Sigmoid colon (tissue), 7 donors: ENCODE measurements at regions of chr19 and their contacts with region 1.

Region 1: DNA sequence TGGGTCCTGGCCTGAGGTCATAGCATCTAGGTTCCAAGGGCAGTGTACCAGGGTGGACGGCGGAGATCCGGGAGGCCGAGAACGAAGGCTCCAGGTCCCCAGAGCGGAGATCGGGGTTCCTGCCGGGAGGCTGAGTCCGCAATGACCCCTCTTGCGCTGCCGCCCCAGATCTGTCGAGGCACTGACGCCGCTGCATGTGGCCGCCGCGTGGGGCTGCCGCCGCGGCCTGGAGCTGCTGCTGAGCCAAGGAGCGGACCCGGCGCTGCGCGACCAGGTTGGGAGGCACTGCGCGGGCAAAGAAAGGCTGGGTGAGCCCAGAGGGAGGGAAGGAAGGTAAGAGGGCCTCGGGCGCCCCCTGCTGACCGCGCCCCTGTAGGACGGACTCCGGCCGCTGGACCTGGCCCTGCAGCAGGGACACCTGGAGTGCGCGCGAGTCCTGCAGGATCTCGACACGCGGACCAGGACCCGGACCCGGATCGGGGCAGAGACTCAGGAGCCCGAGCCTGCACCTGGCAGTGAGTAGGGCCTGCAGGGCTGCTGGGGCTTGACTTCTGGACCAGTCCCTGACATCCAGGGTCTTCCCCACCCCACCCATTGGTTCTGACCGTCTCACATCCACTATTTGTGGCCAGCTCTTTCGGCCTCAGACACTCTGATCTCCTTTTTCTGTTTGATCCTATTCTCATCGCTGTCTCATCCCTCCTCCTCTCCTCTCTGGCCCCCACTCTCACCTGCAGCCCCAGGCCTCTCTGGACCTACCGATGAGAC is 971 bp downstream of the ANKLE1 start:
- DNase-seq: peak; percentile 89
- H3K4me3 ChIP-seq: peak overlapping the region in 3 of 4 donors; percentile 13 to 39 (median 35)
- H3K27ac ChIP-seq: no peak overlapping the region
- H3K4me1 ChIP-seq: peaks cover 0 to 18% (median 15%) of the 10 kb centered on the region in 4 donors
- H3K27me3 ChIP-seq: peaks cover 11 to 15% (median 15%) of the 10 kb centered on the region in 3 donors
- CTCF ChIP-seq: peak; percentile 75 to 91 (median 82)
- EP300 ChIP-seq: no peak
- POLR2A ChIP-seq: no peak

Region 2: GRCh38 chr19:17069218-17069617 is 213.5 kb before region 1 on chr19:
- intact Hi-C with region 1: loop called (anchors 2 kb)
- DNase-seq: no peak
- H3K4me3 ChIP-seq: no peak overlapping the region
- H3K27ac ChIP-seq: no peak overlapping the region
- H3K4me1 ChIP-seq: peaks cover 0 to 9% (median 3%) of the 10 kb centered on the region in 4 donors
- H3K27me3 ChIP-seq: no peaks in the 10 kb centered on the region
- CTCF ChIP-seq: no peak
- EP300 ChIP-seq: no peak
- POLR2A ChIP-seq: no peak

Region 3: GRCh38 chr19:17205237-17206140 is 77.2 kb before region 1 on chr19:
- intact Hi-C with region 1: loop called (anchors 1 kb)
- DNase-seq: peak; percentile 78
- H3K4me3 ChIP-seq: no peak overlapping the region
- H3K27ac ChIP-seq: no peak overlapping the region
- H3K4me1 ChIP-seq: no peaks in the 10 kb centered on the region
- H3K27me3 ChIP-seq: no peaks in the 10 kb centered on the region
- CTCF ChIP-seq: peak; percentile 46 to 71 (median 60)
- EP300 ChIP-seq: no peak
- POLR2A ChIP-seq: no peak